Esophagus squamous epithelium (tissue), 5 donors: ENCODE measurements at regions of chr5 and their contacts with region 1.

Region 1: DNA sequence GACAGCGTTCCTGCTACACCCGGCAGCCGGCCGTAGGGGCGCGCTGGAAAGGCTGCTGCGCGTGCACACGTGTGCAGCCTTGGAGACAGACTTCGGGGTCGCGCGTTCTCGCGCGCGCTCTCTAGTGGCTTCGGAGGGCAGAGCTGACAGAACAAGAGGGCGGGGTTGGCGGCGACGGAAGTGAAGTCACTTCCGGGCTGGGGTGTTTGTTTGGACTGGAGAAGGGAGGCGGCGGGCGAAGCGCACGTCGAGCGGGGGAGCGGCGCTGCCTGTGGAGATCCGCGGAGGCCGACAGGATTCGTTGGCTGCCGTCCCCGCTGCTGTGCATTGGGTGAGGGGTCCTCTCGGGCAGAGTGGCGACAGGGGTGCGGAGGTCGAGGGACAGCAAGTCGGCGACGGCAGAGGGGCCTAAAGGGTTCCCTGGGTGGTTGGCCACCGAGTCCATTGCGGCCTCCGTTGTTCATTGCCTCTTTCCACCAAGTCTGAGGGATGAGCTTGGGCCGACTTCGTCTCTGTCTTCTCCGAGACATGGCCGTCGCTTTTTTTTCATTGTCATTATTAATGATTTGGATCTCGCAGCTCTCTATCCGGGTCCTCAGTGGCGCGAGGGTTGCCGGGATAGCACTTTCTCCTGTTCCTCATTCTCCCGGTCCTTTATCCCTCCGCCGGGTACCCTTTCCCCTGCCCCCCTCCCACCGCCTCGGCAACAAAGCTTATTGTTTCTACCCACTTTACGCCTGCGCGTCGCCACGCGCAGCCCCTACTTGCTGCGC is at the start of gene PAIP2:
- DNase-seq: peak; percentile 92
- H3K4me3 ChIP-seq: peak within 1 kb of the TSS; percentile 87 to 89 (median 88)
- H3K27ac ChIP-seq: peak within 1 kb of the TSS; percentile 99
- H3K4me1 ChIP-seq: peaks cover 14 to 52% (median 23%) of the 10 kb centered on the region in 3 donors
- H3K27me3 ChIP-seq: no peaks in the 10 kb centered on the region
- CTCF ChIP-seq: peak; percentile 61 to 88 (median 82)
- POLR2A ChIP-seq: peak in 3 of 4 donors; percentile 90 to 98 (median 91)
- total RNA-seq, gene PAIP2: 33.7 to 69.0 (median 57.6) TPM

Region 2: GRCh38 chr5:139392678-139393496 is 51.1 kb after region 1 on chr5:
- intact Hi-C with region 1: loop called (anchors 5 kb)
- DNase-seq: no peak
- H3K4me3 ChIP-seq: peak overlapping the region; percentile 35 to 73 (median 56)
- H3K27ac ChIP-seq: peak overlapping the region; percentile 1 to 80 (median 56)
- H3K4me1 ChIP-seq: peaks cover 41 to 75% (median 45%) of the 10 kb centered on the region in 3 donors
- H3K27me3 ChIP-seq: peaks cover 0 to 38% (median 0%) of the 10 kb centered on the region in 4 donors
- CTCF ChIP-seq: peak in 5 of 6 experiments; percentile 49 to 83 (median 69)
- POLR2A ChIP-seq: no peak

Region 3: GRCh38 chr5:139747583-139748504 is 406.0 kb after region 1 on chr5:
- intact Hi-C with region 1: no loop called
- DNase-seq: no peak
- H3K4me3 ChIP-seq: peak overlapping the region; percentile 22 to 63 (median 45)
- H3K27ac ChIP-seq: peak overlapping the region in 1 of 4 donors; percentile 23
- H3K4me1 ChIP-seq: peaks cover 17 to 40% (median 37%) of the 10 kb centered on the region in 3 donors
- H3K27me3 ChIP-seq: peaks cover 0 to 70% (median 14%) of the 10 kb centered on the region in 4 donors
- CTCF ChIP-seq: no peak
- POLR2A ChIP-seq: no peak